ENCODE measurements at regions of chr2 and their contacts with region 1.

Region 1: GRCh38 chr2:177724398-177725287 is 332.1 kb downstream of the AGPS start:
- DNase-seq: peak; percentile 58
- H3K4me3 Mint-ChIP-seq: no peak overlapping the region
- H3K27ac Mint-ChIP-seq: no peak overlapping the region
- H3K4me1 Mint-ChIP-seq: no peaks in the 10 kb centered on the region
- H3K27me3 Mint-ChIP-seq: peaks cover 13% of the 10 kb centered on the region
- CTCF ChIP-seq: peak; percentile 88

Region 2: GRCh38 chr2:177419274-177419673 is 305.4 kb before region 1 on chr2:
- CTCF ChIA-PET with region 1: no interaction called
- intact Hi-C with region 1: loop called (anchors 5 kb)
- DNase-seq: no peak
- H3K4me3 Mint-ChIP-seq: no peak overlapping the region
- H3K27ac Mint-ChIP-seq: peak overlapping the region; percentile 55
- H3K4me1 Mint-ChIP-seq: peaks cover 40% of the 10 kb centered on the region
- H3K27me3 Mint-ChIP-seq: no peaks in the 10 kb centered on the region
- CTCF ChIP-seq: no peak

Region 3: DNA sequence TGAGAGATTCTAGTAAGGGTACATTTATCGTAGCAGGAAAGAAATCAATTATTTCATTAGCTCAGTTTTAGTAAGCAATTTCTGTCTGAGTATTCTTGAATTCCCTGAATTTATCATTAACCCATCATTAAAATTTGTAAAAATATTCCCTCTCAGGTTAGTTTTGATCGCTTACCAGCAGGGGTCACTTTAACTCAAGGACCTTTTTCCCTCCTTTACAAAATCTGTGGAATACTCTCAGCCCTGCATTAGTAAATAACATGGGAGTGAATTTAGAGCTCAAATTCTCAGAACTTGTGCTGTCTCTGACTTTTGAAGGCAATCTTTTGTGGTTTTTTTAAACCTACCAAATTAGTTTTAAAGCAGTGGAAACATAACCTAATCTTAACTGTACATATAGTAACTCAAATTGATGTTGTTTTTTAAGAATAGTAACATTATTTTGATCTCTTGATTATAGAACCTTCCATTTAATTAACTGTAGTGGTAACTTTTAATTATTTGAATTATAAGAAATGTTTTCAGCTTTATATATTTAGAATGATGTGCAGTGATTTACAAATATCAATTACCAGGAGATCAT is 234.8 kb before region 1 on chr2:
- CTCF ChIA-PET with region 1: no interaction called
- intact Hi-C with region 1: loop called (anchors 1 kb)
- DNase-seq: no peak
- H3K4me3 Mint-ChIP-seq: no peak overlapping the region
- H3K27ac Mint-ChIP-seq: no peak overlapping the region
- H3K4me1 Mint-ChIP-seq: no peaks in the 10 kb centered on the region
- H3K27me3 Mint-ChIP-seq: no peaks in the 10 kb centered on the region
- CTCF ChIP-seq: peak; percentile 63